Activated CD4-positive, alpha-beta T cell treated with anti-CD3 and anti-CD28 coated beads, Interleukin-2, amount 10 ng/mL, durations not matched to agents 24 days and 14 days (primary cell): ENCODE measurements at regions of chr17 and their contacts with region 1.

Region 1: GRCh38 chr17:7989781-7990655 is 12.4 kb upstream of the GUCY2D start:
- DNase-seq: peak; percentile 98
- H3K4me3 Mint-ChIP-seq: peak overlapping the region; percentile 79
- H3K27ac Mint-ChIP-seq: peak overlapping the region; percentile 87
- H3K4me1 Mint-ChIP-seq: peaks cover 19% of the 10 kb centered on the region
- H3K27me3 Mint-ChIP-seq: peaks cover 22% of the 10 kb centered on the region

Region 2: GRCh38 chr17:7745748-7746470 is 244.1 kb before region 1 on chr17:
- intact Hi-C with region 1: loop called (anchors 1 kb)
- DNase-seq: no peak
- H3K4me3 Mint-ChIP-seq: no peak overlapping the region
- H3K27ac Mint-ChIP-seq: no peak overlapping the region
- H3K4me1 Mint-ChIP-seq: no peaks in the 10 kb centered on the region
- H3K27me3 Mint-ChIP-seq: peaks cover 18% of the 10 kb centered on the region

Region 3: DNA sequence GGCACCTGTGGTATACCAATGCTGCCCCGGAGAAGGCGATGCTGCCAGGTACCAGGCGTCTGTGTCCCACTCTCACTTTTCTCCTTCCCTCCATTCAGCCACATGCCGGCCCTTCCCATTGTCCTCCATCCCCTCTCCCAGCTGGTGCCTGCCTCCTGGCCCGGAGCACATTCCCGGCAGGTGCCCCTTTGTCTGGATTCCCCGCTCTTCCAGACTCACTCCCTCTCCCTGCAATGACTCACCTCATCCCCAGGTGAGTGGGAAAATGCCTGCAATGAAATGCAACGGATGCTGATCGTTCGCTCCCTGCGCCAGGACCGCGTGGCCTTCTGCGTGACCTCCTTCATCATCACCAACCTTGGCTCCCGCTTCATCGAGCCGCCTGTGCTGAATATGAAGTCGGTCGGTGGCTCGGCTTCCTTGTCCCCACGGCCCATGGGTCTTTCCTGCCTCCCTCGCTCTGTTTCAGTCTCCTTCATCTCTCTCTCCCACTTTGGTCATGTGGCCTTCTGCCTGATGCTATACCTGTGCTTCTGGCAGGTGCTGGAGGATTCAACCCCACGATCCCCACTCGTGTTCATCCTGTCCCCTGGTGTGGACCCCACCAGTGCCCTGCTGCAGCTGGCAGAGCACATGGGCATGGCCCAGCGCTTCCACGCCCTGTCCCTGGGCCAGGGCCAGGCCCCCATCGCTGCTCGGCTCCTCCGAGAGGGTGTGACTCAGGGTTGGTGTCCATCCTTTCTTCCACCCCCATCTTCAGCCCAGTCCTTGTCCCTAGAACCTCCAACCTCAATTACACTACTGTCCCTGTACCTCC is 166.2 kb before region 1 on chr17:
- intact Hi-C with region 1: loop called (anchors 2 kb)
- DNase-seq: no peak
- H3K4me3 Mint-ChIP-seq: no peak overlapping the region
- H3K27ac Mint-ChIP-seq: peak overlapping the region; percentile 12
- H3K4me1 Mint-ChIP-seq: peaks cover 7% of the 10 kb centered on the region
- H3K27me3 Mint-ChIP-seq: peaks cover 20% of the 10 kb centered on the region

Region 4: GRCh38 chr17:7862692-7863437 is 127.2 kb before region 1 on chr17:
- intact Hi-C with region 1: loop called (anchors 2 kb)
- DNase-seq: peak; percentile 85
- H3K4me3 Mint-ChIP-seq: no peak overlapping the region
- H3K27ac Mint-ChIP-seq: peak overlapping the region; percentile 8
- H3K4me1 Mint-ChIP-seq: peaks cover 26% of the 10 kb centered on the region
- H3K27me3 Mint-ChIP-seq: no peaks in the 10 kb centered on the region

Region 5: DNA sequence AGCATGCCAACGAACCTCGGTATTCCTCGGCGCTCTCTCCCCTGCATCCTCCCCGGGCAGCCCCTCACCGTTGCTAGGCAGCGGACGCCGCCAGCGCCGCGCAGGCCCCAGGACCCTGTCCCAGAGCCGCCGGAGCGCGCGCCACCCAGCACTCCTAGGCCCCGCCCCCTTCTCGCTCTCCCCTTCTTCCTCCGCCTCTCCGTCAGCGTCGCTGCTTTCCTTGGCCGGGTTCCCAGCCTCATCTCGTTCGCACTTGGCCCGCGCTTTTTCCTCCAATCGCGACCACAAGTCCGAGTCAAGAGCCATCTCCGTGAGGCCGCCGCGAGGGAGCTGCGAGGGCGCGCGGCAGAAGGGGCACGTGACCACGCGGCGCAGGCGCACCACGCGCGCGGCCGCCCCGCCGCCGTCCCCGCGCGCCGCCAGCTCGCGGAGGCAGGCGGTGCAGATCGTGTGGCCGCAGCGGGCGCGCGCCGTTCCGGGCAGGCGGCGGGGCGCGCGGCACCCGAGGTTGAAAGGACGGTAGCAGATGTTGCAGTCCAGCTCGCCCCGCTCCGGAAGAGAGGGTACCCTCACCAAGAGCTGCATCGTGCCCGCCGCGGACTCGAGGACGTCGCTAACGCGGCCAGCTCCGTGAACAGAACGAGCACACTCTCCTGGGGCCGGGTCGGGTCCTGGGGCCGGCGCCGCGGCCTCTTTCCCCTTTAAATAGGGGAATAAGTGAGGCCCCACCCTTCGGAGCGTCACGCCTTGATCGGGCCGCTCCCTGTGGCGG is 74.2 kb before region 1 on chr17 and contains the start of gene RNF227:
- intact Hi-C with region 1: loop called (anchors 1 kb)
- DNase-seq: peak; percentile 94
- H3K4me3 Mint-ChIP-seq: peak within 1 kb of the TSS; percentile 97
- H3K27ac Mint-ChIP-seq: peak within 1 kb of the TSS; percentile 97
- H3K4me1 Mint-ChIP-seq: peaks cover 26% of the 10 kb centered on the region
- H3K27me3 Mint-ChIP-seq: no peaks in the 10 kb centered on the region
- total RNA-seq, gene RNF227: 6.2 and 6.5 TPM in 2 replicates

Region 6: GRCh38 chr17:7956228-7956965 is 33.6 kb before region 1 on chr17:
- intact Hi-C with region 1: no loop called
- DNase-seq: no peak
- H3K4me3 Mint-ChIP-seq: no peak overlapping the region
- H3K27ac Mint-ChIP-seq: no peak overlapping the region
- H3K4me1 Mint-ChIP-seq: peaks cover 10% of the 10 kb centered on the region
- H3K27me3 Mint-ChIP-seq: peaks cover 12% of the 10 kb centered on the region

Region 7: DNA sequence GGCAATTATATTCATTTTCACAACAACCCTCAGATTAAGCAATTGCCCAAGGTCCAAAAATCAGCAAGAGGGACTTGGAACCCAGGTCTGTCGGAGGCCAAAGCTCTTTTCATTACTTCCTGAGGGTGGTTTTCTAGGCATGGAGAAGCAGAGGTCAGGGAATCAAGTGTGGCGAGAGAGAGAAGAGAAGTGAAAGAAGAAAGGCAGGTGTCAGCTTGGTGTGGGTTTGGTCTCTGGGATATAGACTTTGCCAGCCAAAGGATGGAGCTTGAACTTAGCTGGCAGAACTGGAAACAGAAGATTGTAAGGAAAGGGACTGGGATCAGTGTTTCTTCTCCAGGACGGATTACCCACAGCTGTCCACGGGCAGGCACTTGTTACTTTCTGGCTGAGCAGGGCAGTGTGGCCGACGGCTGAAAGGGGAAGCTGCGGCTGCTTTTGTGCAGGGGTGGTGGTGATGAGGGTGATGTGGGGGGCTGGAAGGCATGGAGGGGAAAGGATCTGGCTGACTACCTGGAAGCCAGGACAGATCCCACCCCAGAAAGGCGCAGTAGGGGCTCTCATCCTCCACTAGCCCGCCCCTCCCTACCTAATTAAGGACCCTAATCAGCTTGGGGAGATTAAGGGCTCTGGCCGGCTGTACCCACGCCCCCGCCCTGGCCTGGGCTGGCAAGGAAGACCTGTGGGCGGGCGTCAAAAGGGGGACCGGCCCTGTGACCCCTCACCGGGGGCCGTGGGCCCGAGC is 12.1 kb after region 1 on chr17 and contains the start of gene GUCY2D:
- intact Hi-C with region 1: no loop called
- DNase-seq: no peak
- H3K4me3 Mint-ChIP-seq: no peak within 1 kb of the TSS
- H3K27ac Mint-ChIP-seq: no peak within 1 kb of the TSS
- H3K4me1 Mint-ChIP-seq: peaks cover 5% of the 10 kb centered on the region
- H3K27me3 Mint-ChIP-seq: peaks cover 48% of the 10 kb centered on the region
- total RNA-seq, gene GUCY2D: not detected in 2 replicates